Breast epithelium (tissue), 4 donors: ENCODE measurements at regions of chr2 and their contacts with region 1.

Region 1: GRCh38 chr2:166180951-166181812 is 53.4 kb upstream of the SCN1A start:
- DNase-seq: peak; percentile 51 to 57
- H3K4me3 ChIP-seq: no peak overlapping the region
- H3K27ac ChIP-seq: no peak overlapping the region
- H3K4me1 ChIP-seq: no peaks in the 10 kb centered on the region
- H3K27me3 ChIP-seq: peaks cover 0 to 8% of the 10 kb centered on the region in 2 donors
- CTCF ChIP-seq: peak in 2 of 3 donors; percentile 40 to 48
- POLR2A ChIP-seq: no peak

Region 2: DNA sequence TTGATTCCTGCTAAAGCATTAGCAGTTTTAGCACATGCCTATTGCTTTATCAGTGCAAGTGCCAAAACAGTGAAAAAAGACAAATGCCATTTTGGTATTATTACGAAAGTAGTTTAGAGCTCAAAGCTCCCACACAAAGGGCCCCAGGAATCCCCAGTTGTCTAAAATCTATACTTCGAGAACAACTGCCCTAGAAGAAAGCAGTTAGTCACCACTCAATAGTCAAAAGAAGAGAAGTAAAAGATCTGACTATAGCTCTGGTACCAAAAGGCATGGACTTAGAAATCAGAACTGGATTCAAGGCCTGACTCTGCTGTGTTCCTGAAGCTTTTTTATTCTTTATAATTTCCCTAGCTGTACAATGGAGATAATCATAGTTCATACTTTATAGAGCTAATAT is 999.2 kb before region 1 on chr2:
- intact Hi-C with region 1: loop called (anchors 10 kb)
- DNase-seq: no peak
- H3K4me3 ChIP-seq: no peak overlapping the region
- H3K27ac ChIP-seq: no peak overlapping the region
- H3K4me1 ChIP-seq: no peaks in the 10 kb centered on the region
- H3K27me3 ChIP-seq: no peaks in the 10 kb centered on the region
- CTCF ChIP-seq: no peak
- POLR2A ChIP-seq: no peak

Region 3: GRCh38 chr2:166234112-166234846 is 53.1 kb after region 1 on chr2:
- intact Hi-C with region 1: no loop called
- DNase-seq: no peak
- H3K4me3 ChIP-seq: no peak overlapping the region
- H3K27ac ChIP-seq: no peak overlapping the region
- H3K4me1 ChIP-seq: no peaks in the 10 kb centered on the region
- H3K27me3 ChIP-seq: no peaks in the 10 kb centered on the region
- CTCF ChIP-seq: no peak
- POLR2A ChIP-seq: no peak

Region 4: GRCh38 chr2:167365216-167365615 is 1184.0 kb after region 1 on chr2:
- intact Hi-C with region 1: no loop called
- DNase-seq: no peak
- H3K4me3 ChIP-seq: no peak overlapping the region
- H3K27ac ChIP-seq: no peak overlapping the region
- H3K4me1 ChIP-seq: no peaks in the 10 kb centered on the region
- H3K27me3 ChIP-seq: no peaks in the 10 kb centered on the region
- CTCF ChIP-seq: no peak
- POLR2A ChIP-seq: no peak